ENCODE measurements at regions of chr17 and their contacts with region 1.

Region 1: DNA sequence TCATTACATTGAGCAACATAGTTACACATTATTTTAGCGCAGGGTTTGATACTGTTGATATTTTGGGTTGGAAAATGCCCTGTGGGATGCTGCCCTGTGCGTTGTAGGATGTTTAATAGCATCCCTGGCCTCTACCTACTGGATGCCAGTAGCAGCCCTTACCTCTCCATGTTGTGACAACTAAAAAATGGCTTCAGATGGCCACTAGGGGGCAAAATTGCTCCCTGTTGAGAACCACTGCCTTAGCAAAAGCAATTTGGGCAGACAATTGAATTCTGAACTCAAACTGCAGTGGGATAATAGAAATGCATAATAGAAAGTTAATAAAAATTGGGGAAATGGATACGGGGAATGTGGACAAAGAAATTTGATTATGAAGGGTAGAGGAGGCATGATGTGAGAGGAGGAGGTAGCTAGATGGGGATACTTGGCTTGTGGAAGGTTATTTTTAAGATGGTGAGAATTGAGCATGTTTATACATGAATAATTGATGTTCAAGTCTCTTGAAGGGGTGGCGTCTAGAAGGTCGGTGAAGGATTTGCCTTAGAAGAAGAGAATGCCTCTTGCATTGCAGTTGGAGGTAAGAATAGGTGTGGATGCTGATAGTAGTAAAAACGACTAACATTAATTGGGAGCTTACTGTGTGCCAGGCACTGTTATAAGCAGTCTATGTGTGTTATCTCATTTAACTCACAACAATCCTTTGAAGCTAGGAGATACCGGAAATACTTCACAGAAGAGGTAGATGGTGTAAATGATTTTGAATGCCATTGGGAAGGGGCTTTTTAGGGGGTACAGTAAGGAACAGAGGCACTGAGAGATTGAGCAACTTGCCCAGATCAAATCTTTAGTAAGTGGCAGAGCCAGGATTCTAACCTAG is 19.0 kb downstream of the HEATR9 start:
- DNase-seq: peak; percentile 24 to 86 (median 61)
- ATAC-seq: peak; percentile 77
- H3K4me3 ChIP-seq: no peak overlapping the region
- H3K4me3 Mint-ChIP-seq: no peak overlapping the region
- H3K27ac ChIP-seq: peak overlapping the region in 1 of 2 experiments; percentile 34
- H3K27ac Mint-ChIP-seq: peak overlapping the region; percentile 53
- H3K4me1 ChIP-seq: no peaks in the 10 kb centered on the region
- H3K4me1 Mint-ChIP-seq: peaks cover 19% of the 10 kb centered on the region
- H3K27me3 ChIP-seq: no peaks in the 10 kb centered on the region
- H3K27me3 Mint-ChIP-seq: no peaks in the 10 kb centered on the region
- CTCF ChIP-seq: peak; percentile 92

Region 2: DNA sequence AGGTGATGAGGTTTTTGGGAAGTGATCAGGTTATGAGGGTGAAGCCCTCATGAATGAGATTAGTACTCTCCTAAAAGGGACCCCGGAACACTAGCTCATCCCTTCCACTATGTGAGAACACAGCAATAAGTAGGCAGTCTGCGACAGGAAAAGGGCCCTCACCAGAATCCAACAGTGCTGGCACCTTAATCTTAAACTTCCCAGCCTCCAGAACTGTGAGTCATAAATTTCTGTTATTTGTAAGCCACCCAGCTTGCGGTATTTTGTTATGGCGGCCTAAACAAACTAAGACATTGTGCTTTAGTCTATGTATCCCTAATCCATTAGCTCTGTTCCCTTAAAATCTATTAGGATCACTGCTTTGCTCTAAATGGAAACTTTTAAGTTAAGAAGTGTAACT is 425.9 kb before region 1 on chr17:
- CTCF ChIA-PET with region 1: no interaction called
- POLR2A ChIA-PET with region 1: no interaction called
- intact Hi-C with region 1: no loop called
- DNase-seq: no peak
- ATAC-seq: no peak
- H3K4me3 ChIP-seq: no peak overlapping the region
- H3K4me3 Mint-ChIP-seq: no peak overlapping the region
- H3K27ac ChIP-seq: no peak overlapping the region
- H3K27ac Mint-ChIP-seq: no peak overlapping the region
- H3K4me1 ChIP-seq: peaks cover 12% of the 10 kb centered on the region
- H3K4me1 Mint-ChIP-seq: peaks cover 12% of the 10 kb centered on the region
- H3K27me3 ChIP-seq: no peaks in the 10 kb centered on the region
- H3K27me3 Mint-ChIP-seq: no peaks in the 10 kb centered on the region
- CTCF ChIP-seq: no peak

Region 3: GRCh38 chr17:35870906-35871819 is 21.5 kb after region 1 on chr17:
- CTCF ChIA-PET with region 1: interaction called, 12 read pairs
- POLR2A ChIA-PET with region 1: interaction called, 18 read pairs
- intact Hi-C with region 1: no loop called
- DNase-seq: peak in 6 of 9 experiments; percentile 27 to 71 (median 50)
- ATAC-seq: peak; percentile 86
- H3K4me3 ChIP-seq: no peak overlapping the region
- H3K4me3 Mint-ChIP-seq: peak overlapping the region; percentile 37
- H3K27ac ChIP-seq: no peak overlapping the region
- H3K27ac Mint-ChIP-seq: peak overlapping the region; percentile 60
- H3K4me1 ChIP-seq: peaks cover 21% of the 10 kb centered on the region
- H3K4me1 Mint-ChIP-seq: peaks cover 49% of the 10 kb centered on the region
- H3K27me3 ChIP-seq: no peaks in the 10 kb centered on the region
- H3K27me3 Mint-ChIP-seq: no peaks in the 10 kb centered on the region
- CTCF ChIP-seq: no peak

Region 4: GRCh38 chr17:35930211-35931065 is 80.7 kb after region 1 on chr17 and contains the start of gene RDM1:
- CTCF ChIA-PET with region 1: interaction called, 4 read pairs
- POLR2A ChIA-PET with region 1: interaction called, 4 read pairs
- intact Hi-C with region 1: loop called in 1 of 2 experiments (anchors 5 kb)
- DNase-seq: peak; percentile 61 to 89 (median 75)
- ATAC-seq: peak; percentile 96
- H3K4me3 ChIP-seq: peak within 1 kb of the TSS; percentile 60 to 64
- H3K4me3 Mint-ChIP-seq: peak within 1 kb of the TSS; percentile 83
- H3K27ac ChIP-seq: no peak within 1 kb of the TSS
- H3K27ac Mint-ChIP-seq: peak within 1 kb of the TSS; percentile 57
- H3K4me1 ChIP-seq: peaks cover 9% of the 10 kb centered on the region
- H3K4me1 Mint-ChIP-seq: peaks cover 18% of the 10 kb centered on the region
- H3K27me3 ChIP-seq: no peaks in the 10 kb centered on the region
- H3K27me3 Mint-ChIP-seq: no peaks in the 10 kb centered on the region
- CTCF ChIP-seq: no peak
- total RNA-seq, gene RDM1: 0.27 TPM in 1 of 2 experiments, not detected in the other

Region 5: GRCh38 chr17:35969558-35970380 is 120.1 kb after region 1 on chr17:
- CTCF ChIA-PET with region 1: interaction called, 8 read pairs
- POLR2A ChIA-PET with region 1: no interaction called
- intact Hi-C with region 1: loop called in 1 of 2 experiments (anchors 1 kb)
- DNase-seq: peak; percentile 49 to 84 (median 74)
- ATAC-seq: peak; percentile 46
- H3K4me3 ChIP-seq: no peak overlapping the region
- H3K4me3 Mint-ChIP-seq: no peak overlapping the region
- H3K27ac ChIP-seq: no peak overlapping the region
- H3K27ac Mint-ChIP-seq: peak overlapping the region; percentile 4
- H3K4me1 ChIP-seq: no peaks in the 10 kb centered on the region
- H3K4me1 Mint-ChIP-seq: no peaks in the 10 kb centered on the region
- H3K27me3 ChIP-seq: no peaks in the 10 kb centered on the region
- H3K27me3 Mint-ChIP-seq: no peaks in the 10 kb centered on the region
- CTCF ChIP-seq: peak; percentile 80

Region 6: DNA sequence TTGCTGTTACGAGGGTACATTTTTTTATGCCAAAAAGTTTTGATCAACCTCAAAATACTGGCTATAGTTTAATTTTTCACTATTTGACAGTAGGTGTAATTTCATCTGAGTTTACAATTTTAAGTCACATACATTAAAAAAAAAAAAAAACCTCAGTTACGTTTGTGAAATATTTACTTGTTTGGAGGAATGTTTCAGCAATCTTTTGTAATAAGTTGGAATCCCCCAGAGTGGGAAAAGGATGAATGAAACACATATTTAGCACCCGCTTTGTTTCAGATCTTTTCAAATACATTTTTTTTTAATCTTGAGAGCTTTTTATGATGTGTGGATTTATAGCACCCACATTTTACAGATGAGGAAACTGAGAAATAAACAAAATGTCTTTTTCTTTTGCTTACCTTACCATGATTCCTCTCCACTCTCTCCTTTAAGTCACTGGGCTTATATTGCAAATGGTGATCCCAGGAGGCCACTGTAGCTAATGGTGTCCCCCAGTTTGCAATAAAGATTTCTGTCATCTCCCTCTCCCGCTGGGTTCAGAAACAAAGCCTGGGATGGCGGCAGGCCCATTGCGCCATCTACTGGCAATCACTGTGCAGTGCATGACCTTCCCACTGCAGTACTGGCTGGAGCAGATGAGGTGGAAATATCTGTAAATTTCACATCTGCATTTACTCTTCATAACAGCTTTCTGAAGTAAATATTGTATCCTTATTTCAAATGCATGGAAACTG is 299.0 kb after region 1 on chr17:
- CTCF ChIA-PET with region 1: interaction called, 23 read pairs
- POLR2A ChIA-PET with region 1: no interaction called
- intact Hi-C with region 1: loop called (anchors 1 to 2 kb)
- DNase-seq: peak; percentile 43 to 84 (median 66)
- ATAC-seq: peak; percentile 85
- H3K4me3 ChIP-seq: peak overlapping the region in 1 of 2 experiments; percentile 23
- H3K4me3 Mint-ChIP-seq: peak overlapping the region; percentile 2
- H3K27ac ChIP-seq: no peak overlapping the region
- H3K27ac Mint-ChIP-seq: no peak overlapping the region
- H3K4me1 ChIP-seq: no peaks in the 10 kb centered on the region
- H3K4me1 Mint-ChIP-seq: peaks cover 5% of the 10 kb centered on the region
- H3K27me3 ChIP-seq: no peaks in the 10 kb centered on the region
- H3K27me3 Mint-ChIP-seq: peaks cover 15% of the 10 kb centered on the region
- CTCF ChIP-seq: peak; percentile 100

Region 7: GRCh38 chr17:36901506-36901905 is 1051.8 kb after region 1 on chr17:
- CTCF ChIA-PET with region 1: no interaction called
- POLR2A ChIA-PET with region 1: no interaction called
- intact Hi-C with region 1: no loop called
- DNase-seq: no peak
- ATAC-seq: no peak
- H3K4me3 ChIP-seq: no peak overlapping the region
- H3K4me3 Mint-ChIP-seq: no peak overlapping the region
- H3K27ac ChIP-seq: no peak overlapping the region
- H3K27ac Mint-ChIP-seq: no peak overlapping the region
- H3K4me1 ChIP-seq: no peaks in the 10 kb centered on the region
- H3K4me1 Mint-ChIP-seq: no peaks in the 10 kb centered on the region
- H3K27me3 ChIP-seq: no peaks in the 10 kb centered on the region
- H3K27me3 Mint-ChIP-seq: peaks cover 20% of the 10 kb centered on the region
- CTCF ChIP-seq: no peak